Activated naive CD4-positive, alpha-beta T cell treated with anti-CD3 and anti-CD28 coated beads for 36 hours (primary cell): ENCODE measurements at regions of chrX and their contacts with region 1.

Region 1: DNA sequence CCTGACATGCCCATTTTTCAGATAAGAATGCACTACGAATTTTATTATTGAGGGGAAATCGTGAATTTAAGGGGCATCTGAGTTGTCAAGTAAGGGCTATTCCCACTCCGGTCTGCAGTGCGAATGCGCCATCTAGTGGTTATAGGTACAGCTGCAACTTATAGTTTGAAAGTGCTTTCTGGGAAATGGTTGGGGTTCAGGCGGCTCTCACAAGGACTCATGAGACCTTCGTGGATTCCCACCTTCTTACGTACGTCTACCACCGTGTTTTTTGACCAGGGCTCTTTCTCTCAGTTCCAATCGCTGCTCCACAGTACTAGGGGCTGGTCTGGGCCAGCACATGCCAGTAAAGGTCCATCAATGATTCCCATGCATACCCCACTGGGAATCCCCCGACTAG is 12.3 kb downstream of the MSL3 start:
- DNase-seq: peak; percentile 64
- H3K4me3 Mint-ChIP-seq: peak overlapping the region; percentile 47
- H3K27ac Mint-ChIP-seq: peak overlapping the region; percentile 92
- H3K4me1 Mint-ChIP-seq: peaks cover 41% of the 10 kb centered on the region
- H3K27me3 Mint-ChIP-seq: no peaks in the 10 kb centered on the region

Region 2: GRCh38 chrX:11724122-11725017 is 46.0 kb before region 1 on chrX:
- CTCF ChIA-PET with region 1: interaction called, 3 read pairs
- intact Hi-C with region 1: loop called (anchors 1 kb)
- DNase-seq: peak; percentile 19
- H3K4me3 Mint-ChIP-seq: no peak overlapping the region
- H3K27ac Mint-ChIP-seq: no peak overlapping the region
- H3K4me1 Mint-ChIP-seq: no peaks in the 10 kb centered on the region
- H3K27me3 Mint-ChIP-seq: no peaks in the 10 kb centered on the region

Region 3: DNA sequence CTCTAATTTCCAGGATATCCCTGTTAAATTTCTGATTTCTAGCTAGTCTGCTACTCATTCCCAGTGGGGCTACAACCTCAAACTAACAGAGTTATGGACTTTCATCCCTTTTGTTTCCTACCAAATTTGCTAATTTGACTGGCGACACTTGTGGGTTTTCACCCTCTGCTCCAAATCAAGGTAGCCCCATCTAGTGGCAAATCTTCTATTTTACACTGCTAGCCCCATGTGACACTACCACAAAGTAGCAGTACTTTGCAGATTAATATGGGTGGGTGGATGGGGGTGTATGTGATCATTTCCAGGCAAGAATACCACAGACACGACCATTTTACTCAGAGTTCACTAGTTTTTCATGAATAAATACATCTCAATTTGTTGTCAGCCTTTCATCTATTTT is 138.1 kb after region 1 on chrX:
- CTCF ChIA-PET with region 1: interaction called, 3 read pairs
- intact Hi-C with region 1: loop called (anchors 5 kb)
- DNase-seq: peak; percentile 48
- H3K4me3 Mint-ChIP-seq: no peak overlapping the region
- H3K27ac Mint-ChIP-seq: no peak overlapping the region
- H3K4me1 Mint-ChIP-seq: peaks cover 3% of the 10 kb centered on the region
- H3K27me3 Mint-ChIP-seq: no peaks in the 10 kb centered on the region

Region 4: DNA sequence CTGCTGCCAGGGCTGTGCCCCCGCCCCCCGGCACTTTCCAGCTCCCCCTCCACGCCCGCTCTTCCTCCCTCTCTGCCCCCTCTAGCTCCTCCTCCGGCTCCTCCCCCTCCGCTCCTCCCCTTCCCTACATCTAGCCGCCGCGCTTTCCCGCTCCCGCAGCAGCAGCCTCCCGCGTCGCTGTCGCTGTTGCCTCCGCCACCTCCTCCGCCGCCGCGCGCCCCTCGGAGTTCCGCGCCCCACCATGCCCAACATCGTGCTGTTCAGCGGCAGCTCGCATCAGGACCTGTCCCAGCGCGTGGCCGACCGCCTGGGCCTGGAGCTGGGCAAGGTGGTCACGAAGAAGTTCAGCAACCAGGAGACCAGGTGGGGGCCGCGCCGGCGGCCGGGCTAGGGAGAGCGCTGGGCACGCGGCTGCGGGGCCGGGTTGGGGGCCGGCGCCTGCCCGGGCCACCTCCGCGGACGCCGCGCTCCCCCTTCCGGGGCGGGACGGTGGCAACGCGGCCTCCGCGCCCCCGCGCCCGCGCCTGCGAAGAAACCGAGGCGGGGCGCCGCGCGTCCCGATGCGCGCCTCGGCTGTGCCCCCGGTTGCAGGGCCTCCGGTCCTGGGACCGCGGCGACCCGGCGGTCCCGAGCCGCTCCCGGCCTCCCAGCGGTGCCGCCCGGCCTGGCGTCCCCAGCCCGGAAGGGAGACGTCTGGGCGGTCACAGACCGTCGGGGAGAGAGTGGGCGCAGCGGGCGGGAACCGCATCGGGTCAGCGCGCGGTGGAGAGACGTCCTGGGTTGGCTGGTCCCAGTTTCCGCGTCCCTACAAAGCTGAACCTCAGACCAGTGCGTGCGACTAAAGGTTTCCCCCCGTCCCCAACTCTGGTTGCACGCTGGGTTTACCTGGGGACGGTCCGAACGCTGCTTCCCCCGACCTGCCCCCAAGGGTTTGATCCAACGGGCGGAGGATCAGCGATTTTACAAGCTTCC is 1021.2 kb after region 1 on chrX and contains the start of gene PRPS2:
- CTCF ChIA-PET with region 1: no interaction called
- intact Hi-C with region 1: loop called (anchors 5 kb)
- DNase-seq: peak; percentile 80
- H3K4me3 Mint-ChIP-seq: peak within 1 kb of the TSS; percentile 82
- H3K27ac Mint-ChIP-seq: peak within 1 kb of the TSS; percentile 90
- H3K4me1 Mint-ChIP-seq: peaks cover 35% of the 10 kb centered on the region
- H3K27me3 Mint-ChIP-seq: no peaks in the 10 kb centered on the region
- total RNA-seq, gene PRPS2: 171 to 180 TPM